CD4-positive, alpha-beta memory T cell (primary cell): ENCODE measurements at regions of chr1 and their contacts with region 1.

Region 1: DNA sequence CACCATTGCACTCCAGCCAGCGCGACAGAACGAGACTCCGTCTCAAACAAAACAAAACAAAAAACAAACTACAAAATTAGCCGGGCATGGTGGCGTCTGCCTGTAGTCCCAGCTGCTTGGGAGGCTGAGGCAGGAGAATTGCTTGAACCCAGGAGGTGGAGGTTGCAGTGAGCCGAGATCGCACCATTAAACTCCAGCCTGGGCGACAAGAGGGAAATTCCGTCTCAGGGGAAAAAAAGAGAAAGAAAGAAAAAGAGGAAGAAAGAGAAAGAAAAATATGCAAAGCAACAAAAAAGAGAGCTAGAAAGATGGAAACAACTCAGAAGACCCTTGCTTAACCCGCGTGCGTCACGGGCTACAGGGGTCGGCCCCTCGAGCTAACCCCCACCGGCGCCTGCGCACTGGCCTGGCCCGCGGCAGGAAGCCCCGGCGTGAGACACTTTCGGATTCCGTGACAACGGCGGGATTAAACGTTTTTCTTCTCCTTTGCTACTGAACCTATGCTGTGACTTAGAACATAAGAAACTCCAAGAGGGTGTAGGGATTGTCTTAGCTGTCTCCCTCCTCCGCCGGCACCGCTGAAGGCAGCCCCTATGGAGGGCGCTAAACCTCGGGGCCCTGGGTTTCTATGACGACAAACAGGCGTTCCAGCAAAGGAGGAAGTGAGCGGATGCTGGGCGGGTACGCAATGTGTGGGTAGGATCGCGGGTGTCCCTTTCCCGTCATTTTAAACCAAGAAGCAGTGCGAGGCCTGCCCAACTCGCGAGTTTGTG is at the start of gene AXDND1:
- DNase-seq: peak; percentile 93 to 96 (median 94)
- H3K4me3 ChIP-seq: peak within 1 kb of the TSS; percentile 71 to 76
- H3K4me3 Mint-ChIP-seq: peak within 1 kb of the TSS; percentile 92 to 99 (median 98)
- H3K27ac ChIP-seq: peak within 1 kb of the TSS; percentile 99
- H3K27ac Mint-ChIP-seq: peak within 1 kb of the TSS; percentile 100
- H3K4me1 ChIP-seq: peaks cover 10% of the 10 kb centered on the region
- H3K4me1 Mint-ChIP-seq: peaks cover 5 to 22% (median 10%) of the 10 kb centered on the region in 4 donors
- H3K27me3 ChIP-seq: no peaks in the 10 kb centered on the region
- H3K27me3 Mint-ChIP-seq: no peaks in the 10 kb centered on the region
- total RNA-seq, gene AXDND1: 0.44 to 1.3 TPM

Region 2: DNA sequence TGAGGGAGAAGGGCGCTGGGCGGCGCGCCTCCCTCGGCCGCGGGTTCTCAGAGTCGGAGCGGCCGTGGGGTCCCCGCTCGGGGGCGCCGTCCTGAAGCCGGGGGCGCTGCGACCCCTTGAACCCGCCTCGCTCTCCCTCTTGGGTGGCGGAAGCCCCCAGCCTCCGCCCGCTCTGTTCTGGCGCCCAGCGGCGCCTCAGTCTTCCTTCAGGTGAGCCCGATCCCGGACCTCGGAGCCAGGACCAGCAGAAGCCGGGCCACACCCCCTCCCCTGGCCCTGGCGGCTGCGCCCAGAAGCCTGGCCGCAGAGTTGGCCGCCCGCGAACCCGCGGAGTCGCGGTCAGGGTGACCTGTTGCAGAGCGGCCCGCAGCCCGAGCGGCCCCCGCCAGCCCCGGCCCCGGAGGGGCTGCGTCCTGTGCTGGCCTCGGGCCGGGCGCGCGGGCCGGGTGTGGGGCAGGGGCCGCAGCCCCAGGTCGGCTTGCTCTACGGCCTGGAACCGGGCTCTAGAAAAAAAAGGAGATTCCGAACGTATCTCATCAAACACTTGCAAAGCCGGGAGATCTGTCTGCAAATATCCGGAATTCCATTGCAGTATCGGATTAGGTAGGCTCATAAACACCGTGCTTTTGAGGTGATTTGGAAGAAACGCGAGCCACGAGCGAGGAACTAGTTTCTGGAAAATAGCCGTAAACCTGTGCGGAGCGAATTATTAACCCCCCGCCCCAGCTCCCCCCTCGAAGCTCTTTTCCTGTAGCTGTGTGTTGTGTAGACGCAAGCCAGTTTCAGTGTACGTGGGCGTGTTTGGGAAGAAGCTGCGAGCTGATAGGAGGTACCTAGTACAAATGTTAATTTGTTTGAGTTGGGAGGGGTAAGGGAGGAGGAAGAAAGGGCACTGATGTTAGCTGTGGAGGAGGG is 639.6 kb before region 1 on chr1:
- CTCF ChIA-PET with region 1: no interaction called
- POLR2A ChIA-PET with region 1: no interaction called
- intact Hi-C with region 1: loop called (anchors 5 kb)
- DNase-seq: peak; percentile 48 to 79 (median 64)
- H3K4me3 ChIP-seq: peak overlapping the region; percentile 45 to 63
- H3K4me3 Mint-ChIP-seq: peak overlapping the region; percentile 74 to 92 (median 86)
- H3K27ac ChIP-seq: peak overlapping the region; percentile 47
- H3K27ac Mint-ChIP-seq: peak overlapping the region; percentile 75 to 91 (median 87)
- H3K4me1 ChIP-seq: peaks cover 14% of the 10 kb centered on the region
- H3K4me1 Mint-ChIP-seq: peaks cover 13 to 27% (median 16%) of the 10 kb centered on the region in 4 donors
- H3K27me3 ChIP-seq: no peaks in the 10 kb centered on the region
- H3K27me3 Mint-ChIP-seq: peaks cover 3 to 9% of the 10 kb centered on the region in 2 donors

Region 3: GRCh38 chr1:179025125-179025974 is 340.2 kb before region 1 on chr1 and contains the start of gene FAM20B:
- CTCF ChIA-PET with region 1: interaction called, 4 read pairs
- POLR2A ChIA-PET with region 1: interaction called, 3 read pairs
- intact Hi-C with region 1: loop called (anchors 1 kb)
- DNase-seq: peak; percentile 85 to 90 (median 88)
- H3K4me3 ChIP-seq: peak within 1 kb of the TSS; percentile 61 to 77
- H3K4me3 Mint-ChIP-seq: peak within 1 kb of the TSS; percentile 88 to 94 (median 90)
- H3K27ac ChIP-seq: peak within 1 kb of the TSS; percentile 77
- H3K27ac Mint-ChIP-seq: peak within 1 kb of the TSS; percentile 85 to 95 (median 90)
- H3K4me1 ChIP-seq: peaks cover 37% of the 10 kb centered on the region
- H3K4me1 Mint-ChIP-seq: peaks cover 29 to 49% (median 39%) of the 10 kb centered on the region in 4 donors
- H3K27me3 ChIP-seq: no peaks in the 10 kb centered on the region
- H3K27me3 Mint-ChIP-seq: no peaks in the 10 kb centered on the region
- total RNA-seq, gene FAM20B: 29.6 to 31.9 TPM

Region 4: GRCh38 chr1:179229214-179230140 is 136.0 kb before region 1 on chr1 and contains the start of gene ABL2:
- CTCF ChIA-PET with region 1: no interaction called
- POLR2A ChIA-PET with region 1: interaction called, 3 read pairs
- intact Hi-C with region 1: loop called (anchors 1 kb)
- DNase-seq: peak; percentile 37 to 58 (median 50)
- H3K4me3 ChIP-seq: peak within 1 kb of the TSS; percentile 14 to 73
- H3K4me3 Mint-ChIP-seq: peak within 1 kb of the TSS; percentile 92 to 98 (median 93)
- H3K27ac ChIP-seq: peak within 1 kb of the TSS; percentile 59
- H3K27ac Mint-ChIP-seq: peak within 1 kb of the TSS; percentile 91 to 95 (median 92)
- H3K4me1 ChIP-seq: peaks cover 23% of the 10 kb centered on the region
- H3K4me1 Mint-ChIP-seq: peaks cover 22 to 37% (median 29%) of the 10 kb centered on the region in 4 donors
- H3K27me3 ChIP-seq: no peaks in the 10 kb centered on the region
- H3K27me3 Mint-ChIP-seq: no peaks in the 10 kb centered on the region
- total RNA-seq, gene ABL2: 16.9 to 18.6 TPM

Region 5: DNA sequence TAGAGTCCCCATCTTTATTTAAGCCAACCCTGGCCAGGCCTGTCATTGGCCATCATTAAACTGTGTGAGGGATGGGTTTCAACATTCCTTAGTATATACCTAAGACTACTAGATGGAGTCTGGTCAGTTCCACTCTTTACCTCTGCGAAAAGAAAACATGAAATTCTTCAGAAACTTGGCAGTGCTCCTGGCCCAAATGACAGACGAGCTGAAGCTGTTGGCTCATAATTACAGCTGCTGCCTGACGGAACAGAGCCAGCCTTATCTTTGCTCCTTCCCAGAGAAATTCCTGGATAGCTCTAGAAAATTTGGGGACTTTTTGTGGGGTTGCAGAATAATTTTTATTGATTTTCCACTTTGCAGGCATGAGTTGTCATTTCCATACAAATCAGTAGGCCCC is 179.8 kb after region 1 on chr1:
- CTCF ChIA-PET with region 1: no interaction called
- POLR2A ChIA-PET with region 1: no interaction called
- intact Hi-C with region 1: no loop called
- DNase-seq: no peak
- H3K4me3 ChIP-seq: no peak overlapping the region
- H3K4me3 Mint-ChIP-seq: no peak overlapping the region
- H3K27ac ChIP-seq: no peak overlapping the region
- H3K27ac Mint-ChIP-seq: no peak overlapping the region
- H3K4me1 ChIP-seq: no peaks in the 10 kb centered on the region
- H3K4me1 Mint-ChIP-seq: no peaks in the 10 kb centered on the region
- H3K27me3 ChIP-seq: no peaks in the 10 kb centered on the region
- H3K27me3 Mint-ChIP-seq: peaks cover 3 to 9% of the 10 kb centered on the region in 2 donors

Region 6: DNA sequence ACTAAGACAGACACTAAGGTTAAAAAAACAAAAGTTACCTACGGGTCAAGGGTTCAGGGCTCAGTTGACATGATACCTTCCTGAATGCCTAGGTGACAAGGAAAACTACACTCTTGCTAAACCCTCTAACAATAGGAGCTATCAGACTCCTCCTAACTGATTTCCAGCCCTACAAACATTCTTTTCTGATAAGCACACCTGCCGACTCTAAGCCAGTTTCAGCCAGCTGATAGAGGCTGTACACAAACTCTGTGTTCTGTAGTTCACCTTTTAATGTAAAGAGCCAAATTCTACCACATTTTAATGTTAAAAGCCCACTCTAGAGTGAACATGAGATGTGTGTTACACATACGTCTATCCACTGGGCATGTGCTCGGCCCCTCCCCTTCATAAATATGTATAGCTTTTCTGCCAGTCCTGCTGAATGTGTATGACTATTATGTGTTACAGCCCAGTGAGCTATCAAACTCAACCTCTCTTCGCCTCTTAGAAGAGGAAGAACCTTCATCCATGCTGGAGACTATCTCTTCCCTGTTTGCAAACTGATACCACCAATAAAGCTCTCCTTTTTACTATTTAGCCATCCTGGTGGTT is 337.5 kb after region 1 on chr1:
- CTCF ChIA-PET with region 1: no interaction called
- POLR2A ChIA-PET with region 1: no interaction called
- intact Hi-C with region 1: no loop called
- DNase-seq: no peak
- H3K4me3 ChIP-seq: no peak overlapping the region
- H3K4me3 Mint-ChIP-seq: no peak overlapping the region
- H3K27ac ChIP-seq: no peak overlapping the region
- H3K27ac Mint-ChIP-seq: peak overlapping the region in 1 of 7 donors; percentile 2
- H3K4me1 ChIP-seq: no peaks in the 10 kb centered on the region
- H3K4me1 Mint-ChIP-seq: peaks cover 0 to 5% (median 1%) of the 10 kb centered on the region in 4 donors
- H3K27me3 ChIP-seq: no peaks in the 10 kb centered on the region
- H3K27me3 Mint-ChIP-seq: peaks cover 0 to 5% of the 10 kb centered on the region in 2 donors

Region 7: GRCh38 chr1:179882243-179883039 is 516.9 kb after region 1 on chr1 and contains the start of gene TOR1AIP1:
- CTCF ChIA-PET with region 1: no interaction called
- POLR2A ChIA-PET with region 1: interaction called, 5 read pairs
- intact Hi-C with region 1: loop called (anchors 2 kb)
- DNase-seq: peak; percentile 98 to 99 (median 98)
- H3K4me3 ChIP-seq: peak within 1 kb of the TSS; percentile 80 to 94
- H3K4me3 Mint-ChIP-seq: peak within 1 kb of the TSS; percentile 94 to 99 (median 96)
- H3K27ac ChIP-seq: peak within 1 kb of the TSS; percentile 99
- H3K27ac Mint-ChIP-seq: peak within 1 kb of the TSS; percentile 99 to 100 (median 100)
- H3K4me1 ChIP-seq: peaks cover 53% of the 10 kb centered on the region
- H3K4me1 Mint-ChIP-seq: peaks cover 31 to 77% (median 53%) of the 10 kb centered on the region in 4 donors
- H3K27me3 ChIP-seq: no peaks in the 10 kb centered on the region
- H3K27me3 Mint-ChIP-seq: no peaks in the 10 kb centered on the region
- total RNA-seq, gene TOR1AIP1: 53.8 to 61.0 TPM